ENCODE measurements at regions of chr2 and their contacts with region 1.

Region 1: GRCh38 chr2:217510771-217511291 is 492.0 kb downstream of the TNS1 start:
- DNase-seq: no peak

Region 2: DNA sequence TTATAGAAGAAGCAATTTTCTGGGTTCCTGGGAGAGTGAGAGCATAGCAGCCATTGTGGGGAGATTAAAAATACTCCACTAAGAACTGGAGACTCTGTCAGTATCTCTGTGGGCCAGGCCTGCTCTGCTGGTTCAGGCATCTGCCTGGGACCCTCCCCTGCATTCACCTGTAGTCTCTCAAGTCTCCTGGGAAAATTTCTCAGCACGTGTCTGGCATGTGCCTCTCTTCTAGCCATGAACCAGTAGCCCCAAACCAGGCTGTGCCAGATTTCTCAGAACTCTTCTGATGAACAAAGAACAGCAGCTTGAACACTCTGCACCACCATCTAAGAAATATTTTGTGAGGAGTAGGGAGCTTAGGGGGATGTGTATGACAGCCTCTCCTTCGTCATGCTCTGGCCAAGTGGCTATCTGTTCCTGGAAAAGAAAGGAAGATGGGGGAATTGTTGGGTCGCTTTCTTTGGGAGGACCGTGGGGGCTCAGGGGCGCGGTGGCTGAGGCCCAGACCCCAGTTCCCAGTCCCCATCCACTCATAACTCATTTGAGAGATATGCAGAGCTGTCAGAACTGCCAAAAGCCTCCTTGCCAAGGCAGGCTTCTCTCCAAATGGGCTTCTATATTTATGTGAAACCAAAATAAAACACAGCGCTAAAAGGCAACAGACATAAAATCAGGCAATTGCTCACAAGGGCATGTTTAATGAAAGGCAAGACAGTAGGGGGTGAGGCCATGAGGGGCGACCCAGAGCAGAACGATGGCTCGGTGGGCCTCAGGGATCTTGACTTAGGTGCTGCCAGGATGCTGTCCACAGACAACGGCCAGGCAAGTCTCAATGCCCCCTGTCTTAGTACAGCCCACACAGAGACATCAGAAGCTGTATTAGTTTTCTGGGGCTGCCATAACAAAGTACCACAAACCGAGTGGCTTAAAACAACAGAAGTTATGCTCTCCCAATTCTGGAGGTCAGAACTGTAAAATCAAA is 536.2 kb before region 1 on chr2:
- intact Hi-C with region 1: loop called in 1 of 2 experiments (anchors 10 kb)
- DNase-seq: peak; percentile 90

Region 3: DNA sequence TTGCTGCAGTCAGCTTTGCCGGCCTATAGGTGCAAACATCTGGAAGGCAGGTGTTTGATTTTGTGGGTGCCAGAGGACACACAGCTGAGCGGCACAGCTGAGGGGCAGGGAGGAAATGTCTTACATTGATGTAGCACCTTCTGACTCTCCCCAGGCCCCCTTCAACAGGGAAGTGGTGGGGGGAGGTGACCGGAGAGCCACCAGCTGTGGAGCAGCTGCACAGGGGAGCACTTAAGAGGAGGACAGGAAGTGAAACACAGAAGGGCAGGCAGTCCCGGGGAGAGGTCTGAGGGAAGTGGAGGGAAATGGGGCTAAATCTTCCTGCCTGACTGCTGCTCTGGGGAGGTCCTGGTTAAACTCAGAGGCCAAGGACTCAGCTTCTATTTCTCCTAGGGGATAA is 82.9 kb after region 1 on chr2:
- intact Hi-C with region 1: no loop called
- DNase-seq: no peak

Region 4: DNA sequence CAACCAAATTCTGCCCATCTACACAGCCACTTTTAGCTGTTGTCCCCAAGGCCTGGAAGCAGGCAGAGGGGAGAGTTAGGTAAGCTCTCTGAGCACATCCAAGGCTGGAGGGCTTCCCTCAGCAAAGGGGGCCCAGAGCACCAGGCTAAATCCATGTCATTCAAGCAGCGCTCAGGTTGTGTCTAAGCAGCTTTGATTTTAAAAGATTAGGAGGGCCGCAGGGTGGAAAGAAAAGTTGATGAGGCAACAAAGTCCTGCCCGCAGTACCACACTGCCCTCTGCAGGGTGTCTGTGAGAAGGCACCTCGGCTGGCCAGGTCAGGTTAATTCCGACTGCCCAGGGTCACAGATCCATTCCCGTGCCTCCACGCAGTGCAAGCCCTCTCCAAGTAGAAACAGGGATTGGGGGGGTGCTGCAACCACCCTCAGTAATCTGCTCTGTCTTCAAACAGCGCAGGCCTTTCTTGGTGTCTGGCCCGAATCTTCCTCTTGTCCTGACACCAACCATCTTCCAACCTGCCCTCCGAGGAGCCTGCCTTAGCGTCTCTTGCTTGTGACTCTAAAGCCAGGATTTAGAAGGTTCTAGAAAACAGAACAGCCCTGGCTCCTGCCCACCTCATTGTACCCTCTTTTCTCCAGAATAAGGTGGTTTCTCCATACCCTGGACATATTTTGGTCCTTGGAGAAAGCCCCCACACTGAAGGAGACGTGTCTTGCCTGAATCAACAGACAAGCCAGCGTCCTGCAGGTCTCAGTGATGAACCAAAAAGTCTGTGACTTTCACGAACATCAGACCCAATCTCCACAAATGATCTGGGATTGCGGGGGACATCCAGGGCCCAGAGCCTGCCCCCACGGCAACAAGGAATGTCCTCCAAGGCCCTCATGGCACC is 202.8 kb after region 1 on chr2:
- intact Hi-C with region 1: loop called in 1 of 2 experiments (anchors 10 kb)
- DNase-seq: peak; percentile 91